Heart right ventricle (tissue), 16 donors: ENCODE measurements at regions of chr15 and their contacts with region 1.

Region 1: GRCh38 chr15:98658831-98659699 is 10.7 kb downstream of the IGF1R start:
- DNase-seq: peak in 1 of 2 donors; percentile 56
- ATAC-seq: peak; percentile 53 to 84 (median 65)
- H3K4me3 ChIP-seq: no peak overlapping the region
- H3K27ac ChIP-seq: no peak overlapping the region
- H3K4me1 ChIP-seq: peaks cover 8 to 89% (median 65%) of the 10 kb centered on the region in 9 donors
- H3K27me3 ChIP-seq: no peaks in the 10 kb centered on the region
- CTCF ChIP-seq: peak; percentile 62 to 91 (median 81)

Region 2: GRCh38 chr15:98085003-98085639 is 573.9 kb before region 1 on chr15:
- intact Hi-C with region 1: no loop called
- DNase-seq: peak in 1 of 2 donors; percentile 40
- ATAC-seq: no peak
- H3K4me3 ChIP-seq: no peak overlapping the region
- H3K27ac ChIP-seq: no peak overlapping the region
- H3K4me1 ChIP-seq: no peaks in the 10 kb centered on the region
- H3K27me3 ChIP-seq: no peaks in the 10 kb centered on the region
- CTCF ChIP-seq: peak; percentile 45 to 82 (median 74)

Region 3: DNA sequence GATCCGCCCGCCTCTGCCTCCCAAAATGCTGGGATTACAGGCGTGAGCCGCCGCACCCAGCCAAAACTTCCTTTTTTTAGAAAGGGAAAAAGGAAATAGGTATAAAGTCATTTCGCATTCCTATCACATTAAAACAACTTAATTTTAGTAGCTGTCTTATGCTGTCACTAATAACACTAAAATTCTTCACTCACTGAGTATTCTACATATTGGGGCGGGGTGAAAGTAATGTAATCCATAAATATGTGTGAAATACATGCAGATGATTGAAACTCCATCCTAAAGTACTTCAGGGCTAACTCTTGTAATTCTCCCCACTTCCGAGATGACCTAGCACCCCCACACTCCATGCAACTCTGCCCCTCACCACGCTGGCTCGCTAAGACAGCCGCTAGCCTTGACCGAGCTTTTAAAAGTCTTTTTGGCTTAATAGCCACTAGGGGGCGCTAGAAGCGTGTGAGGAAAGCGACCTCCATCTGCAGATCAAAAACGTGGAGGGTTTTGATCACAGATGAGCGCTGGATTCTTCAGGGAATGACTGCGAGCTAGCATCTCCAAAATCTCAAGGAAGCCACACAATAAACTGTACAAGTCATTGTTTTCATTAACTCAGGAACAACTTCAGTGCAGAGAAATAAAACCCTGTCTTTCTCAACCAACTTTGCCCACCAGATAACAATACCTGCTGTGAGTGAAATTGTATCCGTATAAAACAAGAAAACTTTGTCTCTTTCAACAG is 140.1 kb before region 1 on chr15:
- intact Hi-C with region 1: loop called in 2 of 10 experiments (anchors 1 to 5 kb)
- DNase-seq: peak in 1 of 2 donors; percentile 59
- ATAC-seq: peak; percentile 77 to 88 (median 82)
- H3K4me3 ChIP-seq: no peak overlapping the region
- H3K27ac ChIP-seq: no peak overlapping the region
- H3K4me1 ChIP-seq: peaks cover 0 to 6% (median 0%) of the 10 kb centered on the region in 9 donors
- H3K27me3 ChIP-seq: peaks cover 0 to 11% (median 0%) of the 10 kb centered on the region in 7 donors
- CTCF ChIP-seq: peak; percentile 76 to 89 (median 79)

Region 4: GRCh38 chr15:98525661-98526001 is 133.4 kb before region 1 on chr15:
- intact Hi-C with region 1: loop called in 1 of 10 experiments (anchors 5 kb)
- DNase-seq: no peak
- ATAC-seq: peak in 1 of 8 donors; percentile 41
- H3K4me3 ChIP-seq: no peak overlapping the region
- H3K27ac ChIP-seq: peak overlapping the region in 1 of 10 donors; percentile 15
- H3K4me1 ChIP-seq: no peaks in the 10 kb centered on the region
- H3K27me3 ChIP-seq: peaks cover 0 to 24% (median 10%) of the 10 kb centered on the region in 7 donors
- CTCF ChIP-seq: no peak

Region 5: DNA sequence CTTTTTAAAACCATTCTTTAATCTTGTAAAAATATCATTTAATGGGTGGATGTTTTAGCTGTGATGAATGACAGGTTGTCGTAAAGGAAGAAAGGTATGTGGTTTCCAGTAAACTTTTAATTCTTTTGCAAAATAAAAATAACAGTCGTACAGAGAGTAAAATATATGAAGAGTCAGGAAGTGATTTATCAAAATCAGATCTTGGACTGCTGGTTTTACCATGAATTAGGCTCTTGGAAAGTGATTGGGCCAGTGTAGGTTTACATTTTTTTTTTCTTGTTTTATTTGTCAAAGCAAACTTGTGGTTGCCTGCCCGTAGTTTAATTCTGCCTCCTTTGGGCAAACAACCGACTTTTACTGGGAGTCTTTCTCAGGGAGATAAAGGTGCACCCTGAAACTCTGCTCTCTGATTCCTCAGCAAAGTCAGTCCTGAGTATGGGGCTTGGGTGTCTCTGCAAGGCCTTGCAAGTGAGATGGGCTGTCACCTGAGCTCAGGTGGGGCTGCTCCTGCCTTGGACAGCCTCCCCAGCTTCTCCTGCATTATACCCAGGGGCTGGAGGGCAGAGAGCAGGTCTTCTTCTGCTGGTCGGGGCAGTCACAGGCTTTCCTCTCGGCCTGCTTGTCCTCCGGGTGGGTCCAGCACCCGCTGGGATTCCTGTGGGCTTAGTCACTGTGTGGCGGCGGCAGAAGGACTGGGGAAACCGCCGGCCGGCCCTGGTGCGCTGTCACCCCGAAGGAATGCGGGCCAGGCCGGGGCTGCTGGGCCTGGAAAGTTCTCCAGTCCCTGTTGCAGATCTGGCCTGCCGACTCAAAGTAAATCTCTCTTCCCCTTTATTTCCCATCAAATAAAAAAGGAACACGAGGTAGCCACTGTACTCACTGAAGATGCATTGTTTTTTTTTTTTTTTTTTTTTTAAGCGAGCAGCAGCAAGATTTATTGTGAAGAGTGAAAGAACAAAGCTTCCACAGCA is 68.3 kb after region 1 on chr15:
- intact Hi-C with region 1: loop called in 5 of 10 experiments (anchors 5 kb)
- DNase-seq: peak; percentile 85
- ATAC-seq: peak; percentile 90 to 97 (median 92)
- H3K4me3 ChIP-seq: peak overlapping the region in 2 of 10 donors; percentile 16 to 23
- H3K27ac ChIP-seq: peak overlapping the region; percentile 67 to 96 (median 88)
- H3K4me1 ChIP-seq: peaks cover 22 to 99% (median 83%) of the 10 kb centered on the region in 9 donors
- H3K27me3 ChIP-seq: no peaks in the 10 kb centered on the region
- CTCF ChIP-seq: no peak

Region 6: DNA sequence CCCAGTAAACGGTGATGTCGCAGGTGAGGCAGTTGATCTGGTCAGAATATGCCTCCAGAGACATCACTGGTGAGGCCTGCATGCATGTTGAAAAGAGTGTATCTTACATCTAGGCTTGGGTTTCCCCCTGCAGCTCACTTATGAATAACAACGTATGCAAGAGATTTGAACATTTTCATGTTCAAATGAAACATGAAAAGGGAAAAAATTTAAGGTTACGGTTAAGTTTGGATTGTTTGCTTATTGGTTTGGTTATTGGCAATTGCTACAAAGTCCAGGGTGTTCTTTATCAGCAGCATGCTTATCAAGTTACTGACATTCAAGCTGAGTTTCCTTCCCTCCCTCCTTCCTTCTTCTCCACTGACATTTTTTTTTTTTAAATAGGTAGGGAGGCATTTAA is 112.5 kb after region 1 on chr15:
- intact Hi-C with region 1: loop called in 6 of 10 experiments (anchors 5 to 10 kb)
- DNase-seq: no peak
- ATAC-seq: peak in 1 of 8 donors; percentile 45
- H3K4me3 ChIP-seq: no peak overlapping the region
- H3K27ac ChIP-seq: peak overlapping the region in 1 of 10 donors; percentile 19
- H3K4me1 ChIP-seq: peaks cover 3 to 82% (median 49%) of the 10 kb centered on the region in 9 donors
- H3K27me3 ChIP-seq: no peaks in the 10 kb centered on the region
- CTCF ChIP-seq: peak in 1 of 9 donors; percentile 24